Activated T-helper 2 cell treated with anti-CD3 and anti-CD28 coated beads, Interferon-gamma antibody, Interleukin-2, Interleukin-4, amounts not matched to agents 10 μg/mL and 5 μg/mL and 100 μg/mL, durations not matched to agents 14 hours and 24 hours and 36 hours (primary cell): ENCODE measurements at regions of chr5 and their contacts with region 1.

Region 1: DNA sequence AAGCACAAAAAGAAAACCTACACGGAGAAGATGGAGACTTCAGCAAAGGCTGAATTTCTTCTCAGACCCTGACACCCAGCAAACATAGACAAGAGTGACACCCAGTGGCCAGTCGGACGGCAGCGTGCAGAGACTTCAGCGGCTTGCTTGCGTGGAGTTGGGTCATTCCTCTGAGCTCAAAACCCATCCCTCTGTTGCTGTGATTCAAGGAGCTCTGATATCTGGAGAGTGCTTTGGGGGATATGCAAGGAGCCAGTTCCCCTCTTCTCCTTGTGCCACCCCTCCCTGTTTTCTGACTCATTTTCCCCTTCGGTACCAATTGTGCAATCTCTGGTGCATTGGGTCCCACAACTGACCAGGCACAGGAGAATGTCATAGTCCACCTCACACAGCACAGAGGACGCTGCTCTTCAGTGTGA is 27.5 kb downstream of the SH3TC2 start:
- DNase-seq: peak; percentile 32
- H3K4me3 Mint-ChIP-seq: no peak overlapping the region
- H3K27ac Mint-ChIP-seq: no peak overlapping the region
- H3K4me1 Mint-ChIP-seq: peaks cover 22% of the 10 kb centered on the region
- H3K27me3 Mint-ChIP-seq: peaks cover 6% of the 10 kb centered on the region

Region 2: DNA sequence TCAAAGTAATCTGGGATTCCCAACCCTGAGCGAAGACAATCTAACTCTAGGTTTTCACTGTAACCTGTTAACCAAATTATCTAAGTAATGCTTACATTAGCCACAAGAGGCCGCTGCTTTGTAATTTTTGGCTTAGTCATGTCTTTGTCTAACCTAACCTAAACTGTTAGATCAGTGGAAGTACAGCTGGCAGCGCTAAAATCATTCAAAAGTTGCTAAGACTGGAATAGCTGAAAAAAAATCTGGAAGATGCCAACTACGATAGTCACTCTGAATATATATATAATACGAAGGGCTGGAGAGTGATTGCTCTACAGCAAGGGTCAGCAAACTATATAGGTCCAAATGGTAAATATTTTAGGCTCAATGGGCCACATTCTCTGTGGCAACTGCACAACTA is 591.4 kb before region 1 on chr5:
- intact Hi-C with region 1: loop called (anchors 5 kb)
- DNase-seq: peak; percentile 15
- H3K4me3 Mint-ChIP-seq: no peak overlapping the region
- H3K27ac Mint-ChIP-seq: no peak overlapping the region
- H3K4me1 Mint-ChIP-seq: peaks cover 2% of the 10 kb centered on the region
- H3K27me3 Mint-ChIP-seq: no peaks in the 10 kb centered on the region

Region 3: GRCh38 chr5:148615644-148616275 is 419.6 kb before region 1 on chr5:
- intact Hi-C with region 1: no loop called
- DNase-seq: no peak
- H3K4me3 Mint-ChIP-seq: no peak overlapping the region
- H3K27ac Mint-ChIP-seq: no peak overlapping the region
- H3K4me1 Mint-ChIP-seq: peaks cover 19% of the 10 kb centered on the region
- H3K27me3 Mint-ChIP-seq: peaks cover 12% of the 10 kb centered on the region

Region 4: DNA sequence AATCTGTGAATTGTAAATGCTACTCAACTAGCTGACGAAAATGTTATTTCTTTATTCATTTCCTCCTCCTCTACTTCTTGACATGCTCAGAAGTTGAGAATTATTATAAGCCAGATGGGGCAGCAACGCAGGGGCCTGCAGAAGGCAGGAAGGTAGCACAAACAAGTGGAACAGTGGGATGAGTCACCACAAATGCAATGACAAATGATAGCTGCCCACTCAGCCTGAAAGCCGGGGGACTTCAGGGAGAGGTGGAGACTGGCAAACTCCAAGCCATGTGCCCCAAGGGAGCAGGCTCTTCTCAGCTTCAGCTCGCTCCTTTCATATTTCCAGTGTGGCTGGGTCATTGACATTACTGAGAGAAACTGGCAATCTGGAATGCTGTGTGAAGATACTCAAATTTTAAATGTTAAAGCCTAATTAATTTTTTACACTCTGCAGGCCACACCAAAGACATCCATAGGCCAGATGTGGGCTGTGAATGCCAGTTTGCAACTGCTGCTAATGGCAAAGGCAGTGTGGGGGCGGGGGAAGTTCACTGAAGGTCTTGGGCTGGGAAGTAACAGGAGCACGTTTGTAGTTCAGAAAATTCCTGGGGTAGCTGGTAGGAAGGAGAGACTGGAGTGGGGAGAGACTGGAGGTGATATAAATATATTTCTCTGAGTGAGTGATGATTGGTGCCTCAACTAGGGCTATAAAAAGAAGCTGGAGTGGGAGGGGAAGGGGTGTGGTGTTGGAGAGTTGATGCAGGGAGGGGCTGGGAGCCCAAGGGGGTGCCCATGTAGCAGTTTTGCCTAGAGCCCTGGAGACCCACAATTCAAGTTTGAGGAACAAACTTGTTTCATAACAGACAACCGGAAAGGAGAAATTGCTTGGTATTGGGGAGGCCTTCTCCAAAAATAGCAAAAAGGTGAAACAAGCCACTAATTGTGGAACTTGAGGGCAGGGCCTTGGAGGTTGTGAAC is 229.8 kb before region 1 on chr5:
- intact Hi-C with region 1: loop called (anchors 10 kb)
- DNase-seq: no peak
- H3K4me3 Mint-ChIP-seq: peak overlapping the region; percentile 11
- H3K27ac Mint-ChIP-seq: peak overlapping the region; percentile 76
- H3K4me1 Mint-ChIP-seq: peaks cover 58% of the 10 kb centered on the region
- H3K27me3 Mint-ChIP-seq: no peaks in the 10 kb centered on the region

Region 5: DNA sequence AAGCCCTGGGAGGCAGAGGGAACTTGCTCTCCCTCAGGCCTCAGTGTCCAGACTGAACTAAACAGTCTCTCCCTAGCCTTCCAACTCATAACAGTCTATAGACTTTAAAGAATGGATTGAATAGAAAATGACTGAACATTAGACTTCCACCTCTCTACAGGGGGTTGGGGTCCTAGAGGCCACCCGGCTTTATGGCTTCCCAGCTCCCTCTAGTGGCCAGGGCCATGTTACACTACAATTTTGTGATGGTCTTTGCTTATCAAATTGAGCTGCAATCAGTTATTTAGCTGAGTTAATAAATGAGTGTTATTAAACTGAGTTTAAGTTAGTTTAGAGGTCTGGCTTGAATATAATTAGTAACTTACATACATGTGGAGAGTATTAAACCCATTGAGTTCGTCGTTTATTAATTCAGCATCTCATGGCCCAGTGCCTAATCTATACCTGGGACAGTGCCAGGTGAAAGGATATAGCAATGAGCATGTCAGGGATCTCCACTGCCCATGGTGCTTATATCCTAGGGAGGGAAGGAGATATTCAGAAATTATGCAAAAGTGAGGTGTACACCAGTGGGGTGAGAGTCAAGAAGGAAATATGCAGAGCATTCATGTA is 77.7 kb before region 1 on chr5:
- intact Hi-C with region 1: loop called (anchors 5 kb)
- DNase-seq: no peak
- H3K4me3 Mint-ChIP-seq: no peak overlapping the region
- H3K27ac Mint-ChIP-seq: no peak overlapping the region
- H3K4me1 Mint-ChIP-seq: no peaks in the 10 kb centered on the region
- H3K27me3 Mint-ChIP-seq: peaks cover 10% of the 10 kb centered on the region

Region 6: GRCh38 chr5:148998174-148998797 is 37.1 kb before region 1 on chr5:
- intact Hi-C with region 1: loop called (anchors 5 kb)
- DNase-seq: no peak
- H3K4me3 Mint-ChIP-seq: no peak overlapping the region
- H3K27ac Mint-ChIP-seq: no peak overlapping the region
- H3K4me1 Mint-ChIP-seq: no peaks in the 10 kb centered on the region
- H3K27me3 Mint-ChIP-seq: peaks cover 20% of the 10 kb centered on the region

Region 7: DNA sequence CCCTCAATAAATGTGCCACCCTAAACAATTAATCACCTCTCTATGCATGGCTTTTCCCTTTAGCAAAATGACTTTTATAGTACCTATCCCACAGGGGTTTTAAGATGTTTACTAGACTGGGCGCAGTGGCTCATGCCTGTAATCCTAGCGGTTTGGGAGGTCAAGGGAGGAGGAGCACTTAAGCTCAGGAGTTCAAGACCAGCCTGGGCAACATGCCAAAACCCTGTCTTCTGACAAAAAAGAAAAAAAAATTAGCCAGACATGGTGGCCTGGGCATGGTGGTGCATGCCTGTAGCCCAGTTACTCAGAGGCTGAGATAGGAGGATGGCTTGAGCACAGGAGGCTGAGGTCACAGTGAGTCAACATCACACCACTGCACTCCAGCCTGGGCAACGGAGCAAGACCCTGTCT is 14.0 kb after region 1 on chr5:
- intact Hi-C with region 1: no loop called
- DNase-seq: no peak
- H3K4me3 Mint-ChIP-seq: no peak overlapping the region
- H3K27ac Mint-ChIP-seq: no peak overlapping the region
- H3K4me1 Mint-ChIP-seq: no peaks in the 10 kb centered on the region
- H3K27me3 Mint-ChIP-seq: peaks cover 7% of the 10 kb centered on the region

Region 8: DNA sequence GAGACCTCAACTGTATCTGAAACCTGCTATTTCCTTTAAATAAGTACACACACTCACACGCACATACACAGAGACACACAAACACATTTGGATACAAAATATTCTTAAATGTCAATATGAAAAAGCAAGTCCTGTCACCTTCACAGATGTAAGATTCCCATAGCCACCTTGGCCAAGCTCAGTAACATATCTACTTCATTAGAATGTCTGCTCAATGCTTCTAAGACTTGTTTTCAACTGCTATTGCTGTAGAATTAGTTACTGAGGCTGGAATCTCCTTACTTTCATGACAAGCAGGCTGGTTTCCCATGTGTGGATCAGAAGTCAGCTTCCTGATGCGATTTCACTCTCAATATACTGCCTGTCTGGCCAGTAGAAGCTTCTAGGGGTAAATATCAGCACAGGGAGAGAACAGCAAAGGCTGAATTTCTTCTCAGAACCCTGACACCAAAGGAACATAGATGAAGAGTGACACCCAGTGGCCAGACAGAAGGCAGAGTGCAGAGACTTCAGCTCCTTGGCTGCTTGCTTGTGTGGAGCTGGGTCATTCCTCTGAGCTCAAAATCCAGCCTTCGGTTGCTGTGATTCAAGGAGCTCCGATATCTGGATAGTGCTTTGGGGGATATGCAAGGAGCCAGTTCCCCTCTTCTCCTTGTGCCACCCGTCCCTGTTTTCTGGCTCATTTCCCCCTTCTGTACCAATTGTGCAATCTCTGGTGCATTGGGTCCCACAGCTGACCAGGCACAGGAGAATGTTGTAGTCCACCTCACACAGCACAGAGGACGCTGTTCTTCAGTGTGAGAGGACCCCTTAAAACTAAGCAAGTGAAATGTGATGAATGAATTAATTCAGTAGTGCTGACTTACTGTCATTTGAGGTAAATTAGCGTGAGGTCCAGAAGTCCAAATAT is 79.3 kb after region 1 on chr5:
- intact Hi-C with region 1: loop called (anchors 2 kb)
- DNase-seq: no peak
- H3K4me3 Mint-ChIP-seq: no peak overlapping the region
- H3K27ac Mint-ChIP-seq: no peak overlapping the region
- H3K4me1 Mint-ChIP-seq: peaks cover 10% of the 10 kb centered on the region
- H3K27me3 Mint-ChIP-seq: peaks cover 22% of the 10 kb centered on the region